H1 (cell line): ENCODE measurements at regions of chr20 and their contacts with region 1.

Region 1: DNA sequence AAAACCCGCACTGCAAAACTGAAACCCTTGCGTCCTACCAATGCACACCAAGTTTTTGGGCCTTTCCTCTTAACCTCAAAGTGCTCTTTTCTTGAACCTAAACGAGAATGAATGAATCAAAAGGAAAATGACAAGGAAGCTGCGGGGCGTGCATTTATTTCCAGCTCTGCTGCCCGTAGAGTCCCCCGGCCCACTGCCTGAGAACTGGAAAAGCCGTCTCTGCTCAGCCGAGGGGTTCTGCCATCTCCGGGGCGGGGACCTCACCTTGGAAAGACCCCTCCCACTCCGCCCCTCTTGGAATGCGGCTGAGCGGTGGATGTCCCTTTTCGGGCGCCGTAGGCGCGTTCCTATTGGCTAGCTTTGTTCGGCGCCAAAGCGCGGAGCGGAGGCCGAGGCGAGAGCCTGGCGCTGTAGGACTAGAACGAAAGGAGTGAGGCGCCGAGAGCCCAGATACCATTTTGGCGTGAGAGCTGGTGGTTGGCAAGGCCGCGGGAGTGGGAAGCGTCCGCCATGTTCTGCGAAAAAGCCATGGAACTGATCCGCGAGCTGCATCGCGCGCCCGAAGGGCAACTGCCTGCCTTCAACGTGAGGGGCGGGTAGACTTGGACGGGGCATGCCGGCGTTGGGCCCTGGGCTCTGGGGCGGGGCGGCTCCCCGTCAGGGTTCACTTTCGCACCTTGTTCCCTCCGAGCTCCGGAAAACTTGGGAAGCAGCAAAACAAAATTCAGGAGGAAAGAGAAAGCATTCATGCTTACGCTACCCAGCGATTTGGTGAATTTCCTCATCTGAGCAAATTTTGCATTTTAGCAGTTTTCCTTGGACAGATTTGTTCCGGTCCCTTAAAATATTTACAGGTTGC is at the start of gene GINS1:
- DNase-seq: peak; percentile 91 to 100
- H3K4me3 ChIP-seq: peak within 1 kb of the TSS; percentile 59 to 90 (median 80)
- H3K27ac ChIP-seq: peak within 1 kb of the TSS; percentile 98
- H3K4me1 ChIP-seq: peaks cover 0 to 8% (median 2%) of the 10 kb centered on the region in 4 experiments; a peak in 2 of 7 replicates
- H3K27me3 ChIP-seq: no peaks in the 10 kb centered on the region
- CTCF ChIP-seq: 0 out of 4 replicates have a peak, but pooled peaks of 1 of the 3 experiments have one; percentile 1
- EP300 ChIP-seq: peak in 1 of 2 experiments; percentile 68; a peak in 1 of 3 replicates
- POLR2A ChIP-seq: peak; percentile 85 to 98
- RAD21 ChIP-seq: no peak
- total RNA-seq, gene GINS1: 68.4 and 69.9 TPM in 2 replicates

Region 2: DNA sequence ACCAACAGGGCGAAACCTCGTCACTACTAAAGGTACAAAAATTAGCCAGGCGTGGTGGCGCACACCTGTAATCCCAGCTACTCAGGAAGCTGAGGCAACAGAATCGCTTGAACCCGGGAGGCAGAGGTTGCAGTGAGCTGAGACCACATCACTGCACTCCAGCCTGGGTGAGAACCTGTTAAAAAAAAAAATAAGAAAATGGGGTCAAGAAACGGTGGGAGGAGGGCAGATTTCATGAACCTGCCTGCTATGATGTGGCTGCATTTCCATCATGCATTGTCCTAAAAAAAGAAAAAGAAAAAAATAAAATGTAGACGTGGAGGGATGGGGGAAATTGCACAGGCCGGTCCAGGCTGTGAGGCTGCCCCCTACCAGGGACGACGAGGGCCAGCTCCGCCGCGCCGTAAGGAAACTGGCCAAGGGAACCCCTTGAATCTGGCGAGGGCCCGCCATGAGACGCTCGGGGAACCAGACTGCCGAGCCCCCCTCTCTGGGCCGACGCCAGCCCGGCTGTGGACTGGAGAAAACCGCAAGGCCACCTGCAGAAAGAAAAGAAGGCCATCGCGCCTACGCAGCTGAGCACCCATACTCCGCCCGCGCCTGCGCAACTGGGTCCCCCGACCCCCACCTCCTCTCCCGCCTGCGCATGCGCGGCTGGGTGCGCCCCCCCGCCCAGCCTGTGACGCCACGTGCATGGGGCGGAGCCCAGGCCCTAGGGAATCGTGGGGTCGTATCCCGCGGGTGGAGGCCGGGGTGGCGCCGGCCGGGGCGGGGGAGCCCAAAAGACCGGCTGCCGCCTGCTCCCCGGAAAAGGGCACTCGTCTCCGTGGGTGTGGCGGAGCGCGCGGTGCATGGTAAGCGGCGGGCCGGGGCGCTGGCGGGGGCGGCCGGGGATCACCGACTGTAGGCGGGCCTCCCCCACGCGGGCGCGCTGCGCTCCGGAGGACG is 212.3 kb before region 1 on chr20 and contains the start of gene ENTPD6:
- CTCF ChIA-PET with region 1: no interaction called
- POLR2A ChIA-PET with region 1: no interaction called
- DNase-seq: peak in 1 of 2 experiments; percentile 93
- H3K4me3 ChIP-seq: peak within 1 kb of the TSS; percentile 73 to 94 (median 80)
- H3K27ac ChIP-seq: no peak within 1 kb of the TSS; the same call in 1 of the 2 replicates
- H3K4me1 ChIP-seq: peaks cover 4 to 12% (median 10%) of the 10 kb centered on the region in 4 experiments
- H3K27me3 ChIP-seq: peaks cover 0 to 6% (median under 1%) of the 10 kb centered on the region in 4 experiments; a peak in 3 of 7 replicates
- CTCF ChIP-seq: peak in 2 of 3 experiments; percentile 10 to 27; a peak in 2 of 4 replicates
- EP300 ChIP-seq: no peak
- POLR2A ChIP-seq: peak in 1 of 2 experiments; percentile 63; a peak in 1 of 3 replicates
- RAD21 ChIP-seq: no peak
- total RNA-seq, gene ENTPD6: 43.9 and 47.8 TPM in 2 replicates

Region 3: DNA sequence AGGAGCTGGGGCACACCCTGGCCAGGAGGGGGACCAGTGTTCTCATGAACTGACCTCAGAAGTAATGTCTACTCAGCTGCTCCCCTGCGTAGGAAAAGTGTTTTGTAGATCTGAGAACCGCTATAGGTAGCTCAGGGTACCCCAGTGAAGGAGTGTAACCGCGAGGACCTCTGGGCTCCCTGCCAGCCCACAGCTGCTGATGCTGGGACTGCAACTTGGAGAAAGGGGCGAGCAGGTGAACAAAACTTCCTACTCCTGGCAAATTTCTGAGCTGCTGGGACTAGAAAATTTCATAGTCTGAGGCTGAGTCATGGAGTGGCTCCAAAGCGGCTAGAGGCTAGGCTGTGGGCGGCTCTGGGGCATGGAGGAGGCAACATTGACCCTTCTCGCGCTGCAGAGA is 107.7 kb before region 1 on chr20:
- CTCF ChIA-PET with region 1: interaction called, 37 read pairs
- POLR2A ChIA-PET with region 1: interaction called, 22 read pairs
- DNase-seq: no peak
- H3K4me3 ChIP-seq: no peak overlapping the region
- H3K27ac ChIP-seq: no peak overlapping the region
- H3K4me1 ChIP-seq: peaks cover 0 to 7% (median 2%) of the 10 kb centered on the region in 4 experiments; a peak in 3 of 7 replicates
- H3K27me3 ChIP-seq: no peaks in the 10 kb centered on the region; a peak in 1 of 7 replicates
- CTCF ChIP-seq: no peak
- EP300 ChIP-seq: no peak
- POLR2A ChIP-seq: no peak
- RAD21 ChIP-seq: no peak; a peak in 1 of 4 replicates

Region 4: GRCh38 chr20:25310268-25310920 is 97.1 kb before region 1 on chr20:
- CTCF ChIA-PET with region 1: interaction called, 3 read pairs
- POLR2A ChIA-PET with region 1: interaction called, 14 read pairs
- DNase-seq: no peak
- H3K4me3 ChIP-seq: no peak overlapping the region
- H3K27ac ChIP-seq: no peak overlapping the region
- H3K4me1 ChIP-seq: peaks cover 0 to 3% (median 0%) of the 10 kb centered on the region in 4 experiments; a peak in 2 of 7 replicates
- H3K27me3 ChIP-seq: no peaks in the 10 kb centered on the region
- CTCF ChIP-seq: peak in 2 of 3 experiments; percentile 28 to 35; a peak in 2 of 4 replicates
- EP300 ChIP-seq: no peak
- POLR2A ChIP-seq: no peak
- RAD21 ChIP-seq: peak; percentile 54 to 55

Region 5: DNA sequence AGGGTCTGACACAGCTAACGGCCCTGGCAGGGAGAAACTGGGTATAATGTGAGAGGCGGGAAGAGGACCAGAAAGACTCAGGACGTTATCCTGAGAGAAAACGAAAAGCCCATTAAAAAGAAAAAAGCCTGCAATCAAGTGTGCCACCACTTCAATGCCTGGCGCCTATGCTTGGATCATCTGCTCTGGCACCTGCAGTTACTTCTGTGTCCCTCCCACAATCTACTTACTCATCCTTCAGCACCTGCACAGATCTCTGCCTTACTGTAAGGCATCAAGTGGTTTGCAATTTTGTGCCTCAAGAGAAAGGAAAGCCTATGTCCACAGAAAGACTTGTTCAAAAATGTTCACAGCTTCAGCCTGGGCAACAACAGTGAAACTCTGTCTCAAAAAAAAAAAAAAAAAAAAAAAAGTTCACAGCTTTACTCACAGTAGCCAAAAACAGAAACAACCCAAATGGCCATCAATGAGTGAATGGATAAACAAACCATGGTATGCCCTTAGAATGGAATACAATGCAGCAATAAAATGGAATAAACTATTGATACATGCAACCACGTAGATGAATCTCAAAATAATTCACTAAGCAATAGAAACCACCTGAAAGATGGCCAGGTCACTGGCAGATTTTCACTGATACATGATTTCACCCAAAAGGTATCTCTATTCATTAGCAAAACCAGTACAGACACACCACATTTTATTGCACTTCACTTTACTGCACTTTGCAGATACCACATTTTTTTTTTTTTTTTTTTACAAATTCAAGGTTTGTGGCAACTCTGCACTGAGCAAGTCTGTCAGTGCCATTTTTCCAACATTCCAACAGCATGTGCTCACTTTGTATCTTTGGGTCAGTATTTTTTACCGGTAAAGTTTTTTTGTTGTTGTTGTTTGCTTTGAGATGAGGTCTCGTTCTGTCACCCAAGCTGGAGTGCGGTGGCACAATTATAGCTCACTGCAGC is 65.5 kb before region 1 on chr20:
- CTCF ChIA-PET with region 1: interaction called, 4 read pairs
- POLR2A ChIA-PET with region 1: interaction called, 13 read pairs
- DNase-seq: no peak
- H3K4me3 ChIP-seq: no peak overlapping the region
- H3K27ac ChIP-seq: no peak overlapping the region
- H3K4me1 ChIP-seq: peaks cover 0 to 9% (median 4%) of the 10 kb centered on the region in 4 experiments; a peak in 4 of 7 replicates
- H3K27me3 ChIP-seq: no peaks in the 10 kb centered on the region
- CTCF ChIP-seq: no peak
- EP300 ChIP-seq: no peak
- POLR2A ChIP-seq: no peak
- RAD21 ChIP-seq: no peak

Region 6: DNA sequence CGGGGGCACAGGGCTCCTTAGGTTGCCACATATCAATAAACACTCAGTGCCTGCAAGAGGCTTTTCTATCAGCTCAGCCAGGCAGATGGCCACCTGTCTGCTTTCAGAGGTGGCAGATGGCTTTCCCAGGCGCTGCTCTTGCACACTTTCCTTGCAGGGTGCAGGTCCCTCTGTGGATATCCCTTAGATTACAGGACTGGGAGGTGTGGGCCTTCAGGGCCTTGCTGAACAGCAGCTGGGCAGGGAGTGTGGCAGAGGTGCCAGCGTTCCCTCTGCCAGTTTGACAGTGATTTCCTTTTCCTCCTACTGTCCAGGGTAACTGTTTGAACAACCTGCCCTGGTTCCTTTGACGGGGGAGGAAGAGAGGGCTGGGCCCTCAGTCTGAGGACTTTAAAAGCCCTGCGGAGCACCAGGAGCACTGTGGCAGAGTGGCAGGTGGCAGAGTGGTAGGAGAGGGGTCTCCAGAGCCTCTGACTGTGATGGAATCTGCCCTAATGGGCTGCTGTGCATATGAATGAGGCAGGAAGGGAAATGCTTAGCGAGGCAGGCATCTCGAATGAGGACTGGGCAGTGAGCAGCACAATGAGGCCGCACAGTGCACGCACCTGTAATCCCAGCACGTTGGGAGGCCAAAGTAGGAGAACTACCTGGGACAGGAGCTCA is 51.1 kb before region 1 on chr20:
- CTCF ChIA-PET with region 1: no interaction called
- POLR2A ChIA-PET with region 1: interaction called, 14 read pairs
- DNase-seq: peak; percentile 58 to 65
- H3K4me3 ChIP-seq: peak overlapping the region in 1 of 4 experiments; percentile 0; a peak in 1 of 8 replicates
- H3K27ac ChIP-seq: peak overlapping the region; percentile 74
- H3K4me1 ChIP-seq: peaks cover 23 to 38% (median 30%) of the 10 kb centered on the region in 4 experiments
- H3K27me3 ChIP-seq: no peaks in the 10 kb centered on the region
- CTCF ChIP-seq: no peak
- EP300 ChIP-seq: peak in 1 of 2 experiments; percentile 69; a peak in 1 of 3 replicates
- POLR2A ChIP-seq: peak; percentile 29 to 49; a peak in 2 of 3 replicates
- RAD21 ChIP-seq: no peak

Region 7: GRCh38 chr20:25390538-25391528 is 16.7 kb before region 1 on chr20 and contains the start of gene ABHD12:
- CTCF ChIA-PET with region 1: no interaction called
- POLR2A ChIA-PET with region 1: interaction called, 33 read pairs
- DNase-seq: peak; percentile 82 to 92
- H3K4me3 ChIP-seq: peak within 1 kb of the TSS; percentile 55 to 95 (median 66)
- H3K27ac ChIP-seq: peak within 1 kb of the TSS; percentile 85
- H3K4me1 ChIP-seq: peaks cover 0 to 3% (median 0%) of the 10 kb centered on the region in 4 experiments; a peak in 2 of 7 replicates
- H3K27me3 ChIP-seq: no peaks in the 10 kb centered on the region
- CTCF ChIP-seq: no peak
- EP300 ChIP-seq: no peak
- POLR2A ChIP-seq: peak; percentile 81 to 87
- RAD21 ChIP-seq: no peak
- total RNA-seq, gene ABHD12: 59.5 and 60.5 TPM in 2 replicates

Region 8: DNA sequence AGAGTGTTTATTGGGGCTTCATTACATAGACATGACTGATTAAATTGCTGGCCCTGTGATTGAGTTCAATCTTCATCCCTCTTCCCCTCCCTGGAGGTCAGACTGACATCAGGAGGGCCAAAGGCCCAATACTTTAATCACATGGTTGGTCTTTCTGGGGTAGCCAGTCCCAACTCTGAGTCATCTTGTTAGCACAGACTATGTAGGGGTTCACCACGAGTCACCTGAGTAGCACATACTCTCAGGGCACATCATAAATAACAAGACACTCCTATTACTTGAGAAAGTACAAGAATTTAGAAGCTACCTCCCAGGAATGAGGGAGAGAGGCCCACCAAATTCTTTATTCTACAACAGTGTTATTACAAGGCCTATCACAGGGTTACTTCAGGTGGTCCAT is 11.2 kb after region 1 on chr20:
- CTCF ChIA-PET with region 1: interaction called, 3 read pairs
- POLR2A ChIA-PET with region 1: interaction called, 42 read pairs
- DNase-seq: no peak
- H3K4me3 ChIP-seq: no peak overlapping the region
- H3K27ac ChIP-seq: no peak overlapping the region
- H3K4me1 ChIP-seq: no peaks in the 10 kb centered on the region
- H3K27me3 ChIP-seq: peaks cover 0 to 1% (median 0%) of the 10 kb centered on the region in 4 experiments; a peak in 1 of 7 replicates
- CTCF ChIP-seq: no peak
- EP300 ChIP-seq: no peak
- POLR2A ChIP-seq: no peak
- RAD21 ChIP-seq: no peak

Region 9: GRCh38 chr20:25608774-25609173 is 201.2 kb after region 1 on chr20:
- CTCF ChIA-PET with region 1: no interaction called
- POLR2A ChIA-PET with region 1: no interaction called
- DNase-seq: no peak
- H3K4me3 ChIP-seq: no peak overlapping the region
- H3K27ac ChIP-seq: no peak overlapping the region
- H3K4me1 ChIP-seq: no peaks in the 10 kb centered on the region; a peak in 1 of 7 replicates
- H3K27me3 ChIP-seq: no peaks in the 10 kb centered on the region
- CTCF ChIP-seq: no peak
- EP300 ChIP-seq: no peak
- POLR2A ChIP-seq: no peak
- RAD21 ChIP-seq: no peak